ENCODE measurements at regions of chr7 and their contacts with region 1.

Region 1: DNA sequence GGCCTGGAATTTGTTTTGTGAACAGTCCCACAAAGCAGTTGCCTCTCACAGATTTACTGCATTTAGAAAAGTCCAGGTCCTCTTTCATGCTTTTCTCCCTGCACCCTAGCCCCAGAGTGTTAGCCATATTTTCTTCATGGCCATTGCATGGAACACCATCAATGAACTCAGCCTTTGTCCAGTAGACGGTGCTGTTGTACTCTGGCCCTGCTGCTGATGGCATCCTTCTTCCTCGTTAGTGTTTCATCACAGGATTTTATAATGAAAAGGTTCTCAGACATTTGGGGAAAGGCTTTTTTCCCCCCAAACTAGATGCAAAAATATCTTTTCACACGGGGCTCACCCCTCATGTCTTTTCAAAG is 93.0 kb upstream of the SLC25A13 start:
- DNase-seq: peak; percentile 35 to 66 (median 45)
- ATAC-seq: peak; percentile 97
- H3K4me3 ChIP-seq: no peak overlapping the region
- H3K27ac ChIP-seq: no peak overlapping the region
- H3K4me1 ChIP-seq: no peaks in the 10 kb centered on the region
- H3K27me3 ChIP-seq: peaks cover 0 to 6% of the 10 kb centered on the region in 2 experiments; a peak in 1 of 5 replicates
- CTCF ChIP-seq: peak; percentile 83 to 84 (median 84)
- EP300 ChIP-seq: no peak
- POLR2A ChIP-seq: no peak
- RAD21 ChIP-seq: peak; percentile 81 to 83

Region 2: DNA sequence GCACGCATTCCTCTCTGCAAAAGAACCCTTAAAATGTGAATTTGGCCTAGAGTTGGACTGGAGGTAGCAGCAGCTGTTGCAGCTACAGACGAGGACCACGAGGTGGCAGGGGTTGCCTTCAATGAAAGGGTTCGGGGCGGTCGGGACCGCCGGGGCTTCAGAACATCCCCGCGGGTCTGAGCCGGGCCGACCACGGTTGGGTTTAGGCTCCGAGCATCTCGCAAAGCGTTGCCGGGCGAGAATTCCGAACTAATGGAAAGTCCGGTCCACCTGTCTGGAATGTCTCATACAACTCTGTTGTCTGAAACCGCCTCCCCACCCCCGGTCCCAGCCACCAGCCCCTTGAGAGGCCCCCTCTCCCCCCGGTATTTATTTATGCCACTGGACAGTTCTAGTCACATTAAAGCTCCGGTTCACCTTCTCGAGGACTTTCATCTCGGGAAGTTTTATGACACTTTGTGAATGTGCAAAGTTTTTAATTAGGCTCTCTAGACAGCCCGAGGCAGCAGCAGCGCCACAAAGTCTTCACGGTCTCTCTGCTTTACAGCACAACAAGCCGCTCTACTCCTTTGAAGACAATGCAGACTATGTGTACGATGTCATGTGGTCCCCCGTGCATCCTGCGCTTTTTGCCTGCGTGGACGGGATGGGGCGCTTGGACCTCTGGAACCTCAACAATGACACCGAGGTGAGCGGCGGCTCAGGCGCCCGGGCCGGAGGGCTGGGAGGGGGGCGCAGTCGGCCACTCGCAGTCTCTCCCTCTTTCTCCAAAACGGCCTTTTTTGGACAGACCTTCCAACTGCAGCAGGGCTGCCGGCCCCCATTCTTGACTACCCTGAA is 339.2 kb before region 1 on chr7:
- CTCF ChIA-PET with region 1: no interaction called
- POLR2A ChIA-PET with region 1: no interaction called
- in situ Hi-C with region 1: no loop called
- intact Hi-C with region 1: loop called (anchors 2 kb)
- DNase-seq: peak; percentile 66 to 76 (median 71)
- ATAC-seq: peak; percentile 97
- H3K4me3 ChIP-seq: peak overlapping the region; percentile 17
- H3K27ac ChIP-seq: no peak overlapping the region
- H3K4me1 ChIP-seq: peaks cover 0 to 9% of the 10 kb centered on the region in 2 experiments; a peak in 2 of 5 replicates
- H3K27me3 ChIP-seq: peaks cover 11 to 13% of the 10 kb centered on the region in 2 experiments
- CTCF ChIP-seq: peak; percentile 76 to 90 (median 83)
- EP300 ChIP-seq: no peak
- POLR2A ChIP-seq: no peak
- RAD21 ChIP-seq: peak; percentile 82 to 86

Region 3: DNA sequence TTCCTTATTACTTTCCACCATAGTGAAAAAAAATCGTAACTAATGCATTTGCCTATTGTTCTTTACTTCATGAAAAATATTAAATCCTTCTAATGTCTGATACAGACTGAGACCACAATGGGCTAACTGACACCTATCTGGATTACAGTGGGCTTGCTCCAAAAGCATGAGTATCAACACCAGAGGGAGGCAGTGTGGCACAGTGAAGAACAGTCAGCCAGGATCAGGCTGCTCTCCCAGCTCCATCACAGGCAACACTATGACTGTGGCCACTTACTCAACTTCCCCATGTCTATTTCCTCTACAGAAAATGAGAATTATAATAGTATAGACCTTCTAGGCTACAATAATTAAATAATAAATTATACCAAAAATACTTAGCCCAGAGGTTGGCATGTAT is 190.2 kb before region 1 on chr7:
- CTCF ChIA-PET with region 1: no interaction called
- POLR2A ChIA-PET with region 1: no interaction called
- in situ Hi-C with region 1: no loop called
- intact Hi-C with region 1: loop called (anchors 1 kb)
- DNase-seq: peak in 2 of 4 experiments; percentile 49 to 58
- ATAC-seq: peak; percentile 93
- H3K4me3 ChIP-seq: no peak overlapping the region
- H3K27ac ChIP-seq: no peak overlapping the region
- H3K4me1 ChIP-seq: no peaks in the 10 kb centered on the region; a peak in 1 of 5 replicates
- H3K27me3 ChIP-seq: no peaks in the 10 kb centered on the region
- CTCF ChIP-seq: peak; percentile 55 to 62 (median 61); a peak in 5 of 6 replicates
- EP300 ChIP-seq: no peak
- POLR2A ChIP-seq: no peak
- RAD21 ChIP-seq: peak; percentile 53 to 68

Region 4: DNA sequence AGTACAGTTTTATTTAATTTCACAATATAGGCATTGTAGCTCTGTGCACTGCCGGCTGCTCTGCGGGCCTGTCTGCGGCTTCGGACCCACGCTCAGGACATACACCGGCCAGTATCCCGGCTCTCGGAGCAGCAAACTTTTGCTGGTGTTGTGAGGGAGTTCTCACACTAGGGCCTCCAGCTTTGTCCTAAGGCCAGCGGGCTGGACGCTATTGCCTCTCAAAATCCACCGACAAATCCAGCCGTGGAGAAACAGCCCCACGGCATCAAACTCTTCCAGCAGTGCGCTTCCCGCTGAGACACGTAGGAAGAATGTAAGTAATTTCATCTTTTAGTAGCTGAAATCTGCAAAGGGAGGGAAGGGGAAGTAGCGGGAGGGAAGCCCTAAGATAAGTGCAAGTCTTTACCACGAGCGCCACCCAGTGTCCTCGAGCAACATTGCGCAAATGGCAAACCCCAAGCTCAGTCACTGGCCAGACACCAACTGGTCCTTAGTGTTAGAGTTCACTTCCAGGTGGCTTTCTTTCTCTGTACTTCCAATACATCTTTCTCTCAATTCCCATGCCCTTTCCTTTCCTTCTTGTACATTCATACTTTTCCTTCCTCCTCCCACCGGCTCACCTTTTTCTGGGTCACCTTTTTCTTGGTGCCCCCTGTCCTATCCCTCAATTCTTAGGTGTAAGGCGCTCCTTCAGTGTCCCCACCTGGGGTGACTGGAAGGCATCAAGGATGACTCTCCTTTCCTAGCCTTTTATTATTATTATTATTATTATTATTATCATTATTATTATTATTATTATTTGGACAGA is 612.7 kb after region 1 on chr7:
- CTCF ChIA-PET with region 1: interaction called, 3 read pairs
- POLR2A ChIA-PET with region 1: no interaction called
- in situ Hi-C with region 1: no loop called
- intact Hi-C with region 1: loop called (anchors 1 kb)
- DNase-seq: peak; percentile 81 to 86 (median 82)
- ATAC-seq: peak; percentile 98
- H3K4me3 ChIP-seq: no peak overlapping the region
- H3K27ac ChIP-seq: no peak overlapping the region
- H3K4me1 ChIP-seq: peaks cover 0 to 9% of the 10 kb centered on the region in 2 experiments; a peak in 1 of 5 replicates
- H3K27me3 ChIP-seq: peaks cover 47 to 55% of the 10 kb centered on the region in 2 experiments
- CTCF ChIP-seq: peak; percentile 85 to 97 (median 96)
- EP300 ChIP-seq: no peak
- POLR2A ChIP-seq: no peak
- RAD21 ChIP-seq: peak; percentile 93 to 94

Region 5: GRCh38 chr7:97845622-97846203 is 1430.8 kb after region 1 on chr7:
- CTCF ChIA-PET with region 1: no interaction called
- POLR2A ChIA-PET with region 1: no interaction called
- in situ Hi-C with region 1: no loop called
- intact Hi-C with region 1: loop called (anchors 10 kb)
- DNase-seq: peak in 2 of 4 experiments; percentile 19 to 47
- ATAC-seq: peak; percentile 59
- H3K4me3 ChIP-seq: no peak overlapping the region
- H3K27ac ChIP-seq: no peak overlapping the region
- H3K4me1 ChIP-seq: no peaks in the 10 kb centered on the region; a peak in 1 of 5 replicates
- H3K27me3 ChIP-seq: no peaks in the 10 kb centered on the region
- CTCF ChIP-seq: peak; percentile 27 to 65 (median 36); a peak in 3 of 6 replicates
- EP300 ChIP-seq: no peak
- POLR2A ChIP-seq: no peak
- RAD21 ChIP-seq: peak; percentile 49 to 62

Measured in K562 (cell line).